HEK293 (cell line): ENCODE measurements at regions of chr22 and their contacts with region 1.

Region 1: DNA sequence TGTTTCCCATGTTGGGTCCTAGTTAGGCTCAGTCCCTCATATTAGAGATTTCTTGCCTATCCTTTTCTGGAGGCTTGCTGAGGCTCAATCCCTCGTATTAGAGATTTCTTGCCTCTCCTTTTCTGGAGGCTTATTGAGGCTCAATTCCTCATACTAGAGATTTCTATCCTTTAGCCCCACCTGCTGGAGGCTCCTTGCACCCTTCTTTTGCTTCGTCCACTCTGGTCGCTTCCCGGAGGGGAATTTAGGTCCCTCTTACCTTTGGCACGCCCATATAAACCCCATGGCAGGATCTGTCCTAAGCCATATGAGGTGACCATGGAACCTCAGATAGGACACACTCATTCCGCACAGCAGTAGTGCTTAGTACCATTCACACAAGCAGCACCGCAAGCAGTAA is 15.9 kb downstream of the CYP2D6 start:
- H3K4me3 ChIP-seq: no peak overlapping the region
- H3K27ac ChIP-seq: no peak overlapping the region
- H3K4me1 ChIP-seq: no peaks in the 10 kb centered on the region
- CTCF ChIP-seq: no peak

Region 2: GRCh38 chr22:41940832-41941765 is 173.6 kb before region 1 on chr22:
- CTCF ChIA-PET with region 1: interaction called, 14 read pairs
- POLR2A ChIA-PET with region 1: no interaction called
- H3K4me3 ChIP-seq: no peak overlapping the region
- H3K27ac ChIP-seq: 0 out of 2 replicates have a peak overlapping the region, but pooled peaks have one; percentile 12
- H3K4me1 ChIP-seq: no peaks in the 10 kb centered on the region; the same call in 1 of the 2 replicates
- CTCF ChIP-seq: peak; percentile 86

Region 3: DNA sequence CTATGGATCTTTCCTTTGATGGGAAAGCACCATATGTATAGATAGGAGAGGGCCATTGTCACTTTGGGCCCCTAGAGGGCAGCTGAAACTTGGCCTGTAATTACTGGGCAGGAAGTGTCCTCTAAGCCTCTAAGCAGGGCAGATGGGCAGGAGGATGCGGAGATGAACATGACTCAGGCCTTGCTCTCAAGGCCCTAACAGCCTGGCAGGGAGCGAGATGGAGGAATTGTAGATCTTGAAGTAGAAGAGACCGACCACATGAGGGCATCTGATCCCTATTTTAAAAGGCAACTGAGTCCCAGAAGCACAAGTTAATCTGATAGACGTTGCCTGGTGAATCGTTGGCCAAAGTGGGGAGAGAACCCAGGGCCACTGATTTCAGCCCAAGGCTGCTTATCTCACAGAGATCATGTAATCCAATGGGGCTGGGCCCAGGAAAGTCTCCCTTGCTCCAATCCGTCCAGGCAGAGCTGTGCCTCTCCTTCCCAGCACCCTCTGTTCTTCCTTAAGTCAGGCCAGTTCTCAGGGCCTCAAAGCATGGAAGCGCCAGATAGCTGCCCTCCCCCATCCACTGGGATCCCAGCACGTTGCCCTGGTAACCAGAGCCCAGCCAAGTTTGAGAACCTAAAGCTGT is 148.0 kb before region 1 on chr22:
- CTCF ChIA-PET with region 1: interaction called, 10 read pairs
- POLR2A ChIA-PET with region 1: no interaction called
- H3K4me3 ChIP-seq: no peak overlapping the region
- H3K27ac ChIP-seq: no peak overlapping the region
- H3K4me1 ChIP-seq: peaks cover 11% of the 10 kb centered on the region
- CTCF ChIP-seq: peak; percentile 77; the same call in 1 of the 2 replicates

Region 4: GRCh38 chr22:42090596-42091454 is 23.9 kb before region 1 on chr22 and contains the start of gene NDUFA6:
- CTCF ChIA-PET with region 1: interaction called, 43 read pairs
- POLR2A ChIA-PET with region 1: no interaction called
- H3K4me3 ChIP-seq: peak within 1 kb of the TSS; percentile 96
- H3K27ac ChIP-seq: peak within 1 kb of the TSS; percentile 78
- H3K4me1 ChIP-seq: no peaks in the 10 kb centered on the region
- CTCF ChIP-seq: peak; percentile 100

Region 5: DNA sequence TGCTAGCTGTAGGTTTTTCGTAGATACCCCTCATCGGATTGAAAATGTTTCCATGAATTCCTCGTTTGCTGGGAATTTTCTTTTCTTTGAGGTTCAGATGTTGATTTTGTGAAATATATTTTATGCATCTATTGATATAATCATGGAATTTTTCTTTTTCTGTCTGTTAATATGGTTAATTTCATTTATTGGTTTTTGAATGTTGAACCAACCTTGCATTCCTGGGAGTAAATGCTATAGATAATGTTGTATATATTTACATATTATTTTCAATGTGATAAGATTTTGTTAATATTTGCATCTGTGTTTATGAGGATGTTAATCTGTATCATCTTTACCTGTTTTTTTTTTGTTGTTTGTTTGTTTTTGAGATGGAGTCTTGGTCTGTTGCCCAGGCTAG is 13.5 kb before region 1 on chr22:
- CTCF ChIA-PET with region 1: interaction called, 14 read pairs
- POLR2A ChIA-PET with region 1: no interaction called
- H3K4me3 ChIP-seq: no peak overlapping the region
- H3K27ac ChIP-seq: no peak overlapping the region
- H3K4me1 ChIP-seq: no peaks in the 10 kb centered on the region
- CTCF ChIP-seq: no peak